Colonic mucosa (tissue), 4 donors: ENCODE measurements at regions of chr6 and their contacts with region 1.

Region 1: DNA sequence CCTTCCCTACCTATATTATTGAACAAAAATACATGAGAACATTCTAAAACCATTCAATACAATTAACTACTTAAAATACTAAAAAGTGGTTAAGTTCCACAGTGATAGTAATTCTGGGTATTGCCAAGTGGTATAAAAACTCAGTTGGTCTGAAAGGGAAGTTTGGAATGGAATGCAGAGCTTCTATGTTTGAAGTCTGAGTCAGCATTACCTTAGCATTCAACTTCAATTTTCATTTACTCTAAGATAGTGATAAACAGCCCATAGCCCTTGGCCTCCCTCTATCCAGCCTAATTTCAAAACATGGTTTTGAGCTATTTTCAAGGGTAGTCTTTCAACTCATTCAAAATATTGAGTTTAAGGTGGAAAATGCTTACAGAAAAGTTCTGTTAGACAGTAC is 140.4 kb upstream of the ASCC3 start:
- DNase-seq: no peak
- H3K4me3 ChIP-seq: no peak overlapping the region
- H3K27ac ChIP-seq: no peak overlapping the region
- H3K4me1 ChIP-seq: no peaks in the 10 kb centered on the region
- H3K27me3 ChIP-seq: no peaks in the 10 kb centered on the region
- CTCF ChIP-seq: no peak

Region 2: GRCh38 chr6:101069191-101069795 is 47.8 kb after region 1 on chr6:
- intact Hi-C with region 1: loop called (anchors 2 kb)
- DNase-seq: no peak
- H3K4me3 ChIP-seq: no peak overlapping the region
- H3K27ac ChIP-seq: no peak overlapping the region
- H3K4me1 ChIP-seq: no peaks in the 10 kb centered on the region
- H3K27me3 ChIP-seq: no peaks in the 10 kb centered on the region
- CTCF ChIP-seq: no peak

Region 3: DNA sequence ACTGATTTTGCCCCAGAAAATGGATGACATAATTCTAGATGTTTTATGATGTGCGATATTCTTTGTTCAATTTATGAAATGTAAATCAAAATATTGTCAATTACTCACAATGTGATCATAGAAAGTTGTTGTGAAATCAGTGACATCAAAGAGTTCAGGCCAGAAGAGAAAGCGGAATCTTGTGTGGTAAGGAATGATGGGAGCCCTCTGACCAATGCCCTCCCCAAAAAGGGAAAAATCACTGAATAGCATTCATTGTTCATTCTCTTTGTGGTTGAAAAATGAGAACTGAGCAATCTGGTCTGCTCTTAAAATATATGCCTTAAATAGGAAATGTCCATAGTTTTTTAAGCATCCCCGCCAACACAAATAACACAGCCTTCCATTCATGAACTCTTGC is 124.9 kb after region 1 on chr6:
- intact Hi-C with region 1: no loop called
- DNase-seq: no peak
- H3K4me3 ChIP-seq: no peak overlapping the region
- H3K27ac ChIP-seq: no peak overlapping the region
- H3K4me1 ChIP-seq: no peaks in the 10 kb centered on the region
- H3K27me3 ChIP-seq: no peaks in the 10 kb centered on the region
- CTCF ChIP-seq: no peak